ENCODE measurements at regions of chr6 and their contacts with region 1.

Region 1: GRCh38 chr6:109382576-109383437 is 540 bp upstream of the CD164 start:
- DNase-seq: peak; percentile 92
- H3K4me3 ChIP-seq: peak overlapping the region; percentile 86 to 95
- H3K27ac ChIP-seq: peak overlapping the region; percentile 96 to 100
- H3K4me1 ChIP-seq: peaks cover 10 to 15% of the 10 kb centered on the region in 2 experiments; a peak in 2 of 4 replicates
- H3K27me3 ChIP-seq: no peaks in the 10 kb centered on the region
- CTCF ChIP-seq: peak; percentile 72
- EP300 ChIP-seq: no peak; a peak in 1 of 4 replicates
- RAD21 ChIP-seq: peak; percentile 76

Region 2: DNA sequence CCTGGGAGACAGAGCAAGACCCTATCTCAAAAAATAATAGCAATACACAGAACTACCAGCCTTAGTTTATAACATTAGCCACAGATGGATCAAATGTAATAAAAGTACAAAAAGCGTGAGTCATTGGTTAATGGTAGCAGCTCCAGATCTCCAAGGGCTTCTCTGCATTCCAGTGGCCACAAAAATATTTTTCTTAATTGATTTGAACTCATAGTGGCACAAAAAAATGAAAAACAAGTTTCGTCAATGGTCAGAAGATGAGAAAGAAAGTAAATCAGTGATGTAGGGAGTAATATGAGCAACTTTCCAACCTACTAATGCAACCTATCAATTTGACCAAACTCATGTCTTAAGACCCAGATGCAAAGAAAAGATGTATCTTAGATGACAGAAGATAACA is 207.9 kb before region 1 on chr6:
- CTCF ChIA-PET with region 1: interaction called, 10 read pairs
- POLR2A ChIA-PET with region 1: no interaction called
- DNase-seq: no peak
- H3K4me3 ChIP-seq: no peak overlapping the region
- H3K27ac ChIP-seq: peak overlapping the region in 1 of 2 experiments; percentile 36; a peak in 3 of 4 replicates
- H3K4me1 ChIP-seq: no peaks in the 10 kb centered on the region
- H3K27me3 ChIP-seq: no peaks in the 10 kb centered on the region
- CTCF ChIP-seq: no peak
- EP300 ChIP-seq: no peak
- RAD21 ChIP-seq: no peak

Region 3: DNA sequence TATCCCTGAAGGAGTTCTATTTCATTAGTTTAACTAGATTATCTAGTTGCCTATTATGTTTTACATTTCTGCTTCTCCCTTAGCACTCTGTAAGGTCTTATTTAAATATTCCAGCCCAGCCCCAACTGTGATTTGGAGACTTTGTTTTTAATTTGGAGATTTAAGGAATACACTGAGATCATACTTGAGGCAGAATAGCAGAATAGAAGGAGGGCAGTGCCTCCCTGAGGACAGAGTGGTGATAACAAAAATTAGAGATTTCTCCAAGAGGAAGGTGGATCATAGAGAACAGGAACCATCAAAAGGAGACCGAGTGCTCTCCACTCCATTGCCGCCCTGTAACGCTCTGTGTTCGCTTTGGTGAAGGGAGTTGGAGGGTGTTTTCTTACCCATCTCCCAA is 14.2 kb after region 1 on chr6:
- CTCF ChIA-PET with region 1: interaction called, 34 read pairs
- POLR2A ChIA-PET with region 1: no interaction called
- DNase-seq: no peak
- H3K4me3 ChIP-seq: no peak overlapping the region
- H3K27ac ChIP-seq: no peak overlapping the region
- H3K4me1 ChIP-seq: no peaks in the 10 kb centered on the region
- H3K27me3 ChIP-seq: no peaks in the 10 kb centered on the region
- CTCF ChIP-seq: peak; percentile 42
- EP300 ChIP-seq: no peak
- RAD21 ChIP-seq: peak; percentile 54

Region 4: DNA sequence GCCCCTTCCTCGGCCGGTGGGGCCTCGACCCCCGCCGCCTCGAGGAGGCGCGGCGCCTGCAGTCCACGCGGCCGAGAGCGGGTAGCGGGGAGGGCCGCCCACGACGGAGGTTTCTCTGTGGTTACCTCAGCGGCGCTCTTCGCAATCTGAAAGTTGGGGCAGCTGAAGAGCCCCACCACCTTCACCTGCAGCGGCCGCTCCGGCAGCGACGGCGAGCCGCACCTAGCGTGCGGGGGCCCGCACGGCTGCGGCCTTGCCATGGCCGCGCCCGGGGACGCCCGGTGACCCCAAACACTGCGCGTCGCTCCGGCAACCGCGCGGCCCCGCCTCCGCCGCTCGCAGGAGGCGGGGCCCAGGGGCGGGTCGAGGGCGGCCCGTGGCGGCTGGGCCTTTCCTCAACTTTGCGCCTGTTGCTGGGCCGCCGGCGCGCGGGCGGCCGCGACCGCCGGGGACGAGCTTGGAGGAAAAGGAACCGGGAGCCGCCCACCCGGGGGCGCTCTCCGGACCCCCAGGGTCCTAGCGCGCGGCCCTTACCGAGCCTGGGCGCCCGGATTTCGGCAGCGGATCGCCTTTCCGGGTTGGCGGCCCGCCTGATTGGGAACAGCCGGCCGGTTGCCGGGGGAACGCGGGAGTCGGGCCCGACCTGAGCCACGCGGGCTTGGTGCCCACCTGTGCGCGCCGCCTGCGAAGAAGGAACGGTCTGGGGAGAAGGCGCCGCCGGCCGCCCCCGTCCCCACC is 57.7 kb after region 1 on chr6 and contains the starts of genes PPIL6 and SMPD2:
- CTCF ChIA-PET with region 1: interaction called, 10 read pairs
- POLR2A ChIA-PET with region 1: interaction called, 3 read pairs
- DNase-seq: peak; percentile 98
- H3K4me3 ChIP-seq: peak within 1 kb of the TSS; percentile 88 to 90
- H3K27ac ChIP-seq: peak within 1 kb of the TSS; percentile 76 to 78
- H3K4me1 ChIP-seq: peaks cover 0 to 23% of the 10 kb centered on the region in 2 experiments; a peak in 1 of 4 replicates
- H3K27me3 ChIP-seq: no peaks in the 10 kb centered on the region
- CTCF ChIP-seq: peak; percentile 38; the same call in 1 of the 2 replicates
- EP300 ChIP-seq: 0 out of 4 replicates have a peak, but pooled peaks of 1 of the 2 experiments have one; percentile 49
- RAD21 ChIP-seq: peak; percentile 30
- polyA plus RNA-seq, gene PPIL6: 1.1 and 1.9 TPM in 2 replicates
- polyA plus RNA-seq, gene SMPD2: 9.7 and 11.4 TPM in 2 replicates